ENCODE measurements at regions of chr10 and their contacts with region 1.

Region 1: GRCh38 chr10:102904346-102904745 is 13.7 kb upstream of the CNNM2 start:
- DNase-seq: no peak
- H3K27ac ChIP-seq: no peak overlapping the region
- CTCF ChIP-seq: no peak

Region 2: GRCh38 chr10:102726274-102726673 is 178.1 kb before region 1 on chr10:
- CTCF ChIA-PET with region 1: interaction called, 13 read pairs
- POLR2A ChIA-PET with region 1: no interaction called
- DNase-seq: no peak
- H3K27ac ChIP-seq: peak overlapping the region; percentile 8
- CTCF ChIP-seq: no peak

Region 3: GRCh38 chr10:102835007-102835482 is 69.3 kb before region 1 on chr10:
- CTCF ChIA-PET with region 1: interaction called, 43 read pairs
- POLR2A ChIA-PET with region 1: no interaction called
- DNase-seq: peak; percentile 84
- H3K27ac ChIP-seq: no peak overlapping the region
- CTCF ChIP-seq: peak; percentile 85

Region 4: DNA sequence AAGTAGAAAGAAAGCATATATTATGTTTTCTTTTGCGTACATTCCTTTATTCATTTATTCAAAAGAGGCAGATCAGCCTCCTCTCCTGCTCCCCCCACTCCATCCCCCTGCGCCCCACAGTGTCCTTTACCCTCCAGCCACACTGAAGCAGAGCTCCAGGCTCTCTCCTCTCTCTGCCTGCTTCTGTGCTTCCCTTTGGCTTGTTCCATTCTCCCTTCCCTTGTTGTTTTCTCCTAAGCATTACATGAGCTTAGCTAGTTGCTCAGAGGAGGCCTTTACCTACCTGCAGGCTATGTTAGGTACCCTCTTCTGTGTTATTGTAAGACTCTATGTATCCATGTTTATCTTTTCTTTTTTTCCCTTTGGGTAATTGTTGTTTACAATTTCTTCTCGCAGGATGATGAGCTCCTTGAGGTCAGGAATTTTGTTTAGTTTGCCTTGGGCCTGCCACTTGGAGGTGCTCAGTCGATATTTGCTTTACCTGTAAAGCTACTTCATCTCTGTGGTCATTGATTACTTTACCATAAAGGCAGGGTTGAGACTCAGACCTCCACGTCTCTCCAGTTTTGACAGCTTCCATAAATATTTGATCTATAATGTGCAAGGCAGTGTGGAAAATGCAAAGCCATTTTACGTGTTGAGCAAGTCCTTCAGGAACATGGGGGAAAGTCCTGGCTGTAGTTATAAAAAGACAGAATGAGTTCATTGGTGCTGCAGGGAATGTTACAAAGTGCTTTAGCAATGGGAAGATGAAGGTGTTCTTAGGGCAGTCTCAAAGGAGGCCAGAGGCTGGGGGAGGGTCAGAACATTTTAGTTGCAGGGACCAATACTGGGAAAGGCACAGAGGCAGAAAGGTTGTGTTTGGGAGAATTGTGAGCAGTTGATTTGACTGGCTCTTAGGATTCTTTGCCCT is 41.4 kb after region 1 on chr10:
- CTCF ChIA-PET with region 1: no interaction called
- POLR2A ChIA-PET with region 1: no interaction called
- DNase-seq: no peak
- H3K27ac ChIP-seq: no peak overlapping the region
- CTCF ChIP-seq: no peak